ENCODE measurements at regions of chr19 and their contacts with region 1.

Region 1: GRCh38 chr19:36054119-36054732 is at the start of gene THAP8:
- DNase-seq: peak; percentile 100
- ATAC-seq: peak; percentile 99
- H3K4me3 ChIP-seq: peak within 1 kb of the TSS; percentile 21 to 54
- H3K27ac ChIP-seq: peak within 1 kb of the TSS in 1 of 2 donors; percentile 77
- H3K4me1 ChIP-seq: no peaks in the 10 kb centered on the region
- H3K27me3 ChIP-seq: no peaks in the 10 kb centered on the region
- total RNA-seq, gene THAP8: 1.8 to 4.1 TPM

Region 2: DNA sequence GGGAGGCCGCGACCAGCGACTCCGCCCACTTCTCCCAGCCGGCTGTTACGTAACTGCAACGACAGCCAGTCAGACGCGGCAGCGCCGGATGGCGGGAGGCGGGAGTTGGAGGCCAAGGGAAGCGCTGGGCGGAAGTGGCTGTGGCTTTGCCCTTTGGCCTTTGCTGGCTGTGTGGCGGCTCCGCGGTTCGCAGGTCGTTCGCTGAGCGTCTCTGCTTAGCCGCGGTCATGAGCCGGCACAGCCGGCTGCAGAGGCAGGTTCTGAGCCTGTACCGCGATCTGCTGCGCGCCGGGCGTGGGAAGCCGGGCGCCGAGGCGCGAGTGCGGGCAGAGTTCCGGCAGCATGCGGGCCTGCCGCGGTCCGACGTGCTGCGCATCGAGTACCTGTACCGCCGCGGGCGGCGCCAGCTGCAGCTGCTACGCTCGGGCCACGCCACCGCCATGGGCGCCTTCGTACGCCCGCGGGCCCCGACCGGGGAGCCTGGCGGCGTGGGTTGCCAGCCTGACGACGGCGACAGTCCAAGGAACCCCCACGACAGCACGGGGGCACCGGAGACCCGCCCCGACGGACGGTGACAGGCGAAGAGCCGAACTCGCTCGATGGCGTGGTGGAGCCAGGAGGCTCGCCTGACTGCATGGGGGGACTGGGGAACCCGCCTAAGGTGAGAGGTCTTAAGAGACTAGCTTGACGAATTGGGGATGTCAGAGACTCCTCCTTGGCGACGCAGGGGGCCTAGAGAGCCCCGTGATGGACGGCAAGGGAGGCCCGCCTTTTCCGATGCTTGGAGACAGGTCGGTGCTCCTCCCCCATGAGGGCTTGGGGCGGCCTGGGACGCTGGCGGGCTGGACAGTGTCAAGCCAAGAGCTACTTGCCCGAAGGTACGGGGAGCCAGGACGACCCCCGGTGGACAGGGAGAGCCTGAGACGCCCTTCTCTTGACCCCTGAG is 58.9 kb before region 1 on chr19 and contains the start of gene SDHAF1:
- intact Hi-C with region 1: loop called (anchors 5 kb)
- DNase-seq: peak; percentile 98 to 99
- ATAC-seq: peak; percentile 95
- H3K4me3 ChIP-seq: peak within 1 kb of the TSS; percentile 76
- H3K27ac ChIP-seq: peak within 1 kb of the TSS in 1 of 2 donors; percentile 45
- H3K4me1 ChIP-seq: no peaks in the 10 kb centered on the region
- H3K27me3 ChIP-seq: no peaks in the 10 kb centered on the region
- total RNA-seq, gene SDHAF1: 11.6 to 16.6 TPM

Region 3: DNA sequence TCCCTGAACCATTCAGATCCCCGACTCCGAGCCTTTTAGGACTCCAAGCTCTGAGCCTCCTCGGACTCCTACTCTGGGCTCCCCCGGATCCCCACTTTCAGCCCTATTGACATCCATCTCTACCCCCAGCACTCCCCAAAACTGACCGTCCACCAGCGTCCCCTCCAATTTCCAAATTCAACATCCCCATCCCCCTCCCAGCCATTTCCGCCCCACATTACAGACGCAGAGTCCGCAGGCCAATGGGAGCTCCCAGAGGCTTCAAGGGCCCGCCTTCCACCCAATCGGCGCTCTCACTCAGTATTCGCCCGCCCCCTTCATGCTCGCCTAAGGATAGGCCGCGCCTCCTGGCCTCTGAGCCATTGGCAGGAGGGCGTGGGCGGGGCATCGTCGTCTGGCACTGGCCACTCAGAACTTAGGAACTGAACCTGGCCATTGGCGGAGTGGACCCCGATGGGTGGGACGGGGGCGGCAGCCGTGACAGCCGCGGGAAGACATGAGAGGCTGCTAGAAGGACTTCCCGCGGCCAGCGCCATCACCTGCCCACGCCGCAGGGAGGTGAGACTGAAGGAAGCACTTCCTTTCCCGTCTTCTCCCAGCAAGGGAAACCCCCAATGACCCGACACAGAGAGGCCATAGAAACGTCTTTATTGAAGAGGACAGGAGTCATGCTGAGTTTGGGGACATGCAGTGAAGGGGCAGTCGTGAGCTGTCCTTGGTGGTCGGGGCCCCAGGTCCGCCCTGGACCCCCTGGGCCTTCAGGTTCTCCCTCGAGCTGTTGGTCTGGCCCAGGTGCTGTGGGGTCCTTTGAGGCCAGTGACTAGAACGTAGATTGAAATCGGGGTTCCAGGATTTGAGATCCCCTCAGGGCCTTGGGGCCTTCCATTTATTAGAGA is 39.9 kb before region 1 on chr19 and contains the start of gene ALKBH6:
- intact Hi-C with region 1: loop called in 1 of 2 experiments (anchors 5 kb)
- DNase-seq: peak; percentile 100
- ATAC-seq: peak; percentile 99
- H3K4me3 ChIP-seq: peak within 1 kb of the TSS; percentile 67 to 73
- H3K27ac ChIP-seq: peak within 1 kb of the TSS in 1 of 2 donors; percentile 22
- H3K4me1 ChIP-seq: no peaks in the 10 kb centered on the region
- H3K27me3 ChIP-seq: no peaks in the 10 kb centered on the region
- total RNA-seq, gene ALKBH6: 14.0 to 15.3 TPM

Region 4: GRCh38 chr19:36114763-36115452 is 60.7 kb after region 1 on chr19 and contains the start of gene POLR2I:
- intact Hi-C with region 1: loop called in 1 of 2 experiments (anchors 2 kb)
- DNase-seq: peak; percentile 100
- ATAC-seq: peak; percentile 98
- H3K4me3 ChIP-seq: peak within 1 kb of the TSS; percentile 48 to 50
- H3K27ac ChIP-seq: peak within 1 kb of the TSS in 1 of 2 donors; percentile 61
- H3K4me1 ChIP-seq: no peaks in the 10 kb centered on the region
- H3K27me3 ChIP-seq: no peaks in the 10 kb centered on the region
- total RNA-seq, gene POLR2I: 33.7 to 48.1 TPM

Measured in aorta (tissue), 5 donors.